CD8-positive, alpha-beta T cell (primary cell): ENCODE measurements at regions of chr14 and their contacts with region 1.

Region 1: GRCh38 chr14:47149326-47149725 is 497.7 kb upstream of the RPL10L start:
- DNase-seq: no peak
- ATAC-seq: no peak
- H3K4me3 ChIP-seq: no peak overlapping the region
- H3K4me3 Mint-ChIP-seq: no peak overlapping the region
- H3K27ac ChIP-seq: no peak overlapping the region
- H3K27ac Mint-ChIP-seq: no peak overlapping the region
- H3K4me1 ChIP-seq: no peaks in the 10 kb centered on the region
- H3K4me1 Mint-ChIP-seq: no peaks in the 10 kb centered on the region
- H3K27me3 ChIP-seq: no peaks in the 10 kb centered on the region
- H3K27me3 Mint-ChIP-seq: no peaks in the 10 kb centered on the region
- CTCF ChIP-seq: no peak

Region 2: DNA sequence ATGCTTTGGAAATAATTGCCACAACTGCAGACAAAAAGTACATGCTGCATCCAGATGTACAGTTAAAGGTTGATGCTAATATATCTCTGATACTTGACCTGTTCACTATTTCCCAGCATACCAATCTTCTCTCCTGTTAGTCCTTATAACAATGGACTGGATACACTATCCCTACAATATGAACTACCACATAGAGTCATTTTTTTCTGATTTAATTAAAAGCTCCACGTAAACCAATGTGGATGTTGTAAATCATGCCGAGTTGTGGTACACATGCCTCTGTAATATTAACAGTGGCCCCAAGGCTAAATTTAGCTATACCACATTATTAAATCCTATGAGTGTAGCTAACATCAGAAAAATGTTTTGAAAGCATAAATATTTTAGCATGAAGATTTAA is 28.7 kb before region 1 on chr14:
- CTCF ChIA-PET with region 1: no interaction called
- POLR2A ChIA-PET with region 1: no interaction called
- intact Hi-C with region 1: loop called in 1 of 2 experiments (anchors 1 kb)
- DNase-seq: no peak
- ATAC-seq: no peak
- H3K4me3 ChIP-seq: no peak overlapping the region
- H3K4me3 Mint-ChIP-seq: no peak overlapping the region
- H3K27ac ChIP-seq: no peak overlapping the region
- H3K27ac Mint-ChIP-seq: no peak overlapping the region
- H3K4me1 ChIP-seq: no peaks in the 10 kb centered on the region
- H3K4me1 Mint-ChIP-seq: no peaks in the 10 kb centered on the region
- H3K27me3 ChIP-seq: no peaks in the 10 kb centered on the region
- H3K27me3 Mint-ChIP-seq: no peaks in the 10 kb centered on the region
- CTCF ChIP-seq: no peak